Sigmoid colon (tissue), 7 donors: ENCODE measurements at regions of chr19 and their contacts with region 1.

Region 1: DNA sequence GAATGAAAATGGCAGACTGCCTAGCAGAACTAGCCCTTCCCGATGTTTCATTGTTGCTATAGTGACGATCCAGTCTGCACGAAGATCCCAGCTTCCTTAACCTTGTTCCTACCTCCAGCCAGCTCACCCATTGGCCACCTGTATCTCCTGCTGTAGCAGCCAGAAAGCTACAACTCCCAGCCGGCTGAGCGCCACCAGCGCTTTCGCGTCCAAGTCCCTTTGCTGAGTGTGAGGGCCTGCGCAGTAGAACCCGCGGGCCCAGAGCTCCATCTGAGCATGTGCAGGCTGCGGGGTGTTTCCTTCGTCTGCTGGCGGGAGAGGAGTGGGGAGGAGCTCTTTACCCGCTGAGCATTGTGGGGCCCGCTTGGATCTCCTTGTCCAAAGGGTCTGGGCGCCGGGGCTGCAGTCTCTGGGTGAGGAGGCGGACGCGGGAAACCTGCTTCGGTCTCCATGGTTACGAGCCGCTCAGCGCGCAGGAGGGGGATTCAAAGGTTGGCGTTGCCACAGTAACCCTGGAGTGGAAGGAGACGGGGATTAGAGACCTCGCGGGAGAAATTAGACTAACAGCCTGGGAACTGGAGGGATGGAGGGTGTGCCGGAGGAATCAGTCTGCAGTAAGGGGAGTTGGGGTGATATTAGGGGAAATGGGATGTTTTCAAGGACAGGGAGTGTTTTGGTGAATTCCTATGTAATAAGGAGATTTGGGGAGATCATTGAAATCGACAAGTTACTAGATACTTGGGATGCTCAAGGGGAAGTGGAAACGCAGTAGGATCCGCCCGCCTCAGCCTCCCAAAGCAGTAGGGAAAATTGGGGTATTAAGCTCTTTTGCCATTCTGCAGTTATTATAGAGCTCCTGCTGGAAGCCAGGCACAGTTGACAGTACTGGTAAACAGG is 33.5 kb downstream of the ZSWIM9 start:
- DNase-seq: peak; percentile 96
- H3K4me3 ChIP-seq: peak overlapping the region; percentile 61 to 76 (median 68)
- H3K27ac ChIP-seq: peak overlapping the region; percentile 77 to 79 (median 78)
- H3K4me1 ChIP-seq: peaks cover 0 to 21% (median 15%) of the 10 kb centered on the region in 4 donors
- H3K27me3 ChIP-seq: no peaks in the 10 kb centered on the region
- CTCF ChIP-seq: no peak
- EP300 ChIP-seq: no peak
- POLR2A ChIP-seq: peak in 1 of 2 donors; percentile 35

Region 2: DNA sequence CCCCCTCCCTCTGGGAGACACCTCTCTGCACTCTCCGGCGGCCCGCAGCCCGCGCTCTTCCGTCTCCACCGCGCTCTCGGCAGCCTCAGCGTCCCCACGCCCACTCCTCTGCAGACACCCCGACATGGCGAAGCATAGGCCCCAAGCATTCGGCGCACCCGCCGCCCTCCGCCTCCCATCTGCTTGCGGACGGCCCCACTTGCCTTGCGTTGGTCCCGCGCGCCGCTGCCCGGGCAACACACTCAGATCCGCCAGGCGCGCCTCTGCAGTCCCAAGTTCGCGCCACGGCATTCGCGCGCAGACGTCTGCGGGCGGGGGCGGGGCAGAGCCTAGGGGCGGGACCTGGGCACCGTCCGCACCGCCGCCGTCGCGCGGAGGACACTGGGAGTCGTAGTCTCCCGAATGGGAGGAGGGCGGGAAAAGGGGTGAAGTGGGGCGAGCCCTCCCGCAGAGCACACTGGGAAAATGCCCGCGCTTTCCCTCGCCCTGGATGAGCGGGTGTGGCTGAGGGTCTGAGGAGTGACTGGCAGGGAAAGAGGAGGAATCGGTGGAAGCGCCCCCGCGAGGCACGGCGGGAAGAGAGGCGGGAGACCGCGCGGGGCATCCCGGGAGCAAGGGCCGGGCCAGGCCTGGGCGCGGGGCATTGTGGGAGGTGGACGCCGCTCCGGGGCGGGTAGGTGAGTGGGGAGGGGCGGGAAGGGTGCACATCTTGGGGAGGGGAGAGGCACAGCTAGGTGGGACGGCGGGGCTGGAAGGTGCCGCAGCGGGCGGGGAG is 33.8 kb before region 1 on chr19 and contains the starts of genes LIG1 and ZSWIM9:
- intact Hi-C with region 1: loop called (anchors 2 kb)
- DNase-seq: peak; percentile 94
- H3K4me3 ChIP-seq: peak within 1 kb of the TSS; percentile 70 to 84 (median 80)
- H3K27ac ChIP-seq: peak within 1 kb of the TSS; percentile 83 to 96 (median 87)
- H3K4me1 ChIP-seq: peaks cover 0 to 22% (median 16%) of the 10 kb centered on the region in 4 donors
- H3K27me3 ChIP-seq: no peaks in the 10 kb centered on the region
- CTCF ChIP-seq: no peak
- EP300 ChIP-seq: peak in 1 of 4 donors; percentile 63
- POLR2A ChIP-seq: no peak
- total RNA-seq, gene LIG1: 4.3 to 16.9 (median 6.5) TPM
- total RNA-seq, gene ZSWIM9: 2.4 to 10.0 (median 4.0) TPM

Region 3: GRCh38 chr19:48271531-48272151 is 67.7 kb after region 1 on chr19:
- intact Hi-C with region 1: no loop called
- DNase-seq: no peak
- H3K4me3 ChIP-seq: peak overlapping the region; percentile 3 to 44 (median 38)
- H3K27ac ChIP-seq: no peak overlapping the region
- H3K4me1 ChIP-seq: peaks cover 0 to 15% (median 14%) of the 10 kb centered on the region in 4 donors
- H3K27me3 ChIP-seq: peaks cover 0 to 39% (median 22%) of the 10 kb centered on the region in 3 donors
- CTCF ChIP-seq: no peak
- EP300 ChIP-seq: no peak
- POLR2A ChIP-seq: no peak